IMR-90 (cell line): ENCODE measurements at regions of chrX and their contacts with region 1.

Region 1: GRCh38 chrX:14801136-14801535 is 71.7 kb downstream of the FANCB start:
- DNase-seq: peak; percentile 19
- ATAC-seq: no peak
- H3K4me3 ChIP-seq: no peak overlapping the region
- H3K27ac ChIP-seq: no peak overlapping the region
- H3K4me1 ChIP-seq: 0 out of 2 replicates have a peak, but pooled peaks cover 2% of the 10 kb centered on the region
- H3K27me3 ChIP-seq: no peaks in the 10 kb centered on the region
- CTCF ChIP-seq: no peak
- POLR2A ChIP-seq: no peak
- RAD21 ChIP-seq: no peak

Region 2: GRCh38 chrX:14598330-14598729 is 202.8 kb before region 1 on chrX:
- CTCF ChIA-PET with region 1: no interaction called
- POLR2A ChIA-PET with region 1: no interaction called
- dilution Hi-C with region 1: no loop called
- in situ Hi-C with region 1: no loop called
- intact Hi-C with region 1: no loop called
- DNase-seq: no peak
- ATAC-seq: no peak
- H3K4me3 ChIP-seq: no peak overlapping the region
- H3K27ac ChIP-seq: no peak overlapping the region
- H3K4me1 ChIP-seq: no peaks in the 10 kb centered on the region
- H3K27me3 ChIP-seq: no peaks in the 10 kb centered on the region
- CTCF ChIP-seq: no peak
- POLR2A ChIP-seq: no peak
- RAD21 ChIP-seq: no peak

Region 3: DNA sequence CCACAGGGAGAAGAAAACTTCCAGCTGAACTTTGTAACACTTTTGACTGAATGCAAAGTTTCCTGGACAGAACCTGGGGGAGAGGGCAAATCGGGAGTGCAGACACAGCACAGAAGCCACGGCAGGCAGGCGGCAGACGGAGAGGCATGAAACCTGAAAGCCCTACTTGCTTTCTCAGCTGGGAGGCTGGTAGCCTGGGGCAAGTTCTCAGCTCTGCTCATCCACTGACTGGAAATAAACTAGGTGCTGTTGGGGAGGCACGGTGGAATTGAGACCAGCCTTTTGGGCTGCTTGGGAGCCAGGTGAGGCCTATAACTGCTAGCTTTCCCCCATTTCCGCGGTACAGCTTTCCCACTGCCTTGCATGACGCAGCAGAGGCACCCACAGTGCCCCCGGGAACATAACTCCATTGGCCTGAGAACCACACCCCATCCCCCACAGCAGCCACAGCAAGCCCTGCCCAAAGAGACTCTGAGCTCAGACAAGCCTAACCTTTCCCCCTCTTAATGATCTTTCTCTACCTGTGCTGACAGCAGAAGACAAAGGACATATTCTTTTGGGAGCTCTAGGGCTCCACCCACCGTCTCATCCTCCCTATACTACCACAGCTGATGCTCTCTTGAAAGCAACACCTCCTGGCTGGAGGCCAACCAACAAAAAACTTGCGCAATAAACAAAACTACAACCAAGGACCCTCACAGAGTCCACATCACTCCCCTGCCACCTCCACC is 43.2 kb before region 1 on chrX:
- CTCF ChIA-PET with region 1: no interaction called
- POLR2A ChIA-PET with region 1: no interaction called
- dilution Hi-C with region 1: no loop called
- in situ Hi-C with region 1: no loop called
- intact Hi-C with region 1: loop called (anchors 1 kb)
- DNase-seq: no peak
- ATAC-seq: no peak
- H3K4me3 ChIP-seq: no peak overlapping the region
- H3K27ac ChIP-seq: no peak overlapping the region
- H3K4me1 ChIP-seq: no peaks in the 10 kb centered on the region
- H3K27me3 ChIP-seq: no peaks in the 10 kb centered on the region
- CTCF ChIP-seq: no peak
- POLR2A ChIP-seq: no peak
- RAD21 ChIP-seq: no peak

Region 4: DNA sequence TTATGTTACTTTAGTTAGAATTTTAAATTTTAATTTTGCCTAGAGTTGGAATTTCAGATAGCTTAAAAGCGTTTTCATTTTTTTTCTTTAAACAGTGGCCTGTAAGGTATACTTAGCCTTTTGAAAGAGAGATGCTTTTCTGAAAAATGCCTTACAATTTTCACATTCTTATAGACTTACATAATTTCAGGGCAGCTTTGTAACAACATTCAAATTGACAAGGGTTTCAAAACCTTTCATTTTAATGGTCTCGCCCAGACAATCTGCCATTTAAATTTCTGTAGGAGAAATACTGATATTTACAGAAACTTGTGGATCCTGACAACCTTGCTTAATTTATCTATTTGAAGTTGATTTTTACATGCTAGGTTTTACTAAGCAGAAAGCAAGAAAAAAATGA is 41.6 kb after region 1 on chrX:
- CTCF ChIA-PET with region 1: no interaction called
- POLR2A ChIA-PET with region 1: no interaction called
- dilution Hi-C with region 1: no loop called
- in situ Hi-C with region 1: no loop called
- intact Hi-C with region 1: loop called (anchors 1 kb)
- DNase-seq: peak; percentile 4
- ATAC-seq: peak; percentile 24; the same call in 1 of the 2 replicates
- H3K4me3 ChIP-seq: no peak overlapping the region
- H3K27ac ChIP-seq: no peak overlapping the region
- H3K4me1 ChIP-seq: no peaks in the 10 kb centered on the region
- H3K27me3 ChIP-seq: no peaks in the 10 kb centered on the region
- CTCF ChIP-seq: no peak
- POLR2A ChIP-seq: no peak
- RAD21 ChIP-seq: no peak